ENCODE measurements at regions of chr5 and their contacts with region 1.

Region 1: DNA sequence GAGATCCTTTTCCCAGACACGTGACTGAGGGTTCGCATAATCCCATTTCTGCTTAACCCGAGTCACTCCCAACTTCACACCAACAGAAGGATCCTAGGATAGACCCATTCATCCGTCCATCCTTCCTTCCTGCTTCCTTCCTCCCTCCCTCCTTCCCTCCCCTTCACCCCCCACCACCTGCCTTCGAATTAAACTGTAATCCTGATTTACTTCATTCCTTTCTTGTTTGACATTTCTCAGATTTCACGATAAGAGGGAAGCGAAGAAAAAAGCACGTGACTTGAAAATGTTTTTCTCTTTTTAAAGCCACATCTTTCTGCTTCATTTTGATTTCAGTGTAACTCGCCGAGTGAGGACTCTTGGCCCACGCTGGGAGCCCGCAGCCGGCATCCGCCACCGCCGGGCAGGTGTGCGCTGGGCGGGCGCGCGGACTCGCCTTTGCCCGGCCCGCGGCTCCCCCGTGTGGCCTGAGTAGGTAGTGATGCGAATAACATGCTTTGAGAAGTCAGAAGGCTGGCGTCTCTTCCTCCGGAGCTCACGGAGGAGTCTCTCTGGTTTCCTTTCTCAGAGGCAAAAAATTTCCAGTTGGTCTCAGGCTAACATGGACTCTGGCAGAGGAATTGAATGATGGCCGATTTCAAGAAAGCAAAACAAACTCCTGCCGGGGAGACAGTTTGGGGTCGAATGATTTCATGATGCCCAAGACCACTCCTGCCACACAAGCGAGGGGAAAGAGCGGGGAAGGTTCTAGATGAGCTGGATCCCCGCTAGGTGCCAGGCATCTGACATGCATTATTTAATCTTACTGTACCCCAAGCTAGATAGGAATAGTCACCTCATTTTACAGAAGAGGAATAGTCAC is 117.7 kb downstream of the SLC12A2 start:
- DNase-seq: peak; percentile 81 to 89
- ATAC-seq: peak; percentile 75 to 87 (median 80)
- H3K4me3 ChIP-seq: peak overlapping the region; percentile 43
- H3K27ac ChIP-seq: peak overlapping the region; percentile 88
- H3K4me1 ChIP-seq: peaks cover 42% of the 10 kb centered on the region
- H3K27me3 ChIP-seq: no peaks in the 10 kb centered on the region
- CTCF ChIP-seq: peak; percentile 92

Region 2: GRCh38 chr5:127666043-127666716 is 535.1 kb before region 1 on chr5:
- intact Hi-C with region 1: loop called in 1 of 2 experiments (anchors 10 kb)
- DNase-seq: no peak
- ATAC-seq: peak; percentile 37 to 66 (median 57)
- H3K4me3 ChIP-seq: no peak overlapping the region
- H3K27ac ChIP-seq: peak overlapping the region; percentile 69
- H3K4me1 ChIP-seq: peaks cover 16% of the 10 kb centered on the region
- H3K27me3 ChIP-seq: no peaks in the 10 kb centered on the region
- CTCF ChIP-seq: no peak

Region 3: DNA sequence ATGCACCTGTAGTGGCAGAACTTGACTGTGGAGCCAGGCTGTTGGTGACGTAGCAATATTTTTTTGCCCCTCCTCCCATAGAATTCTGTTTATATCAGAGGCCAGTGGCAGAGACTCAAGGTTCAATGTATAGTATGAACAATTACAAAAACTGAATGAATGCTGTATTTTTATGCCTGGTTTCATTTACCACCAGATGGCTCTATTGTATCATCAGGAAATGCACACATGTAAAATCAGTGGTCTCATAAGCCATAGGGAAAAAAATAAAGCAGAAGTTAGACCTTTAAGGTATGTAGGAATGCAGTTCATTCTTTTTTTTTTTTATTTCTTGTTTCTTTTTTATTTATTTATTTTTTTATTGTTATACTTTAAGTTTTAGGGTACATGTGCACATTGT is 454.5 kb before region 1 on chr5:
- intact Hi-C with region 1: loop called (anchors 1 to 10 kb)
- DNase-seq: no peak
- ATAC-seq: no peak
- H3K4me3 ChIP-seq: no peak overlapping the region
- H3K27ac ChIP-seq: no peak overlapping the region
- H3K4me1 ChIP-seq: peaks cover 4% of the 10 kb centered on the region
- H3K27me3 ChIP-seq: no peaks in the 10 kb centered on the region
- CTCF ChIP-seq: peak; percentile 33

Region 4: GRCh38 chr5:127875235-127876021 is 325.9 kb before region 1 on chr5:
- intact Hi-C with region 1: loop called (anchors 5 to 10 kb)
- DNase-seq: peak; percentile 28 to 77
- ATAC-seq: peak; percentile 87 to 95 (median 93)
- H3K4me3 ChIP-seq: peak overlapping the region; percentile 37
- H3K27ac ChIP-seq: peak overlapping the region; percentile 74
- H3K4me1 ChIP-seq: peaks cover 47% of the 10 kb centered on the region
- H3K27me3 ChIP-seq: no peaks in the 10 kb centered on the region
- CTCF ChIP-seq: peak; percentile 32

Region 5: GRCh38 chr5:128144491-128144890 is 56.8 kb before region 1 on chr5:
- intact Hi-C with region 1: no loop called
- DNase-seq: no peak
- ATAC-seq: peak; percentile 57 to 71 (median 66)
- H3K4me3 ChIP-seq: no peak overlapping the region
- H3K27ac ChIP-seq: peak overlapping the region; percentile 69
- H3K4me1 ChIP-seq: peaks cover 12% of the 10 kb centered on the region
- H3K27me3 ChIP-seq: no peaks in the 10 kb centered on the region
- CTCF ChIP-seq: no peak

Measured in psoas muscle (tissue), 8 donors.